ENCODE measurements at regions of chr10 and their contacts with region 1.

Region 1: DNA sequence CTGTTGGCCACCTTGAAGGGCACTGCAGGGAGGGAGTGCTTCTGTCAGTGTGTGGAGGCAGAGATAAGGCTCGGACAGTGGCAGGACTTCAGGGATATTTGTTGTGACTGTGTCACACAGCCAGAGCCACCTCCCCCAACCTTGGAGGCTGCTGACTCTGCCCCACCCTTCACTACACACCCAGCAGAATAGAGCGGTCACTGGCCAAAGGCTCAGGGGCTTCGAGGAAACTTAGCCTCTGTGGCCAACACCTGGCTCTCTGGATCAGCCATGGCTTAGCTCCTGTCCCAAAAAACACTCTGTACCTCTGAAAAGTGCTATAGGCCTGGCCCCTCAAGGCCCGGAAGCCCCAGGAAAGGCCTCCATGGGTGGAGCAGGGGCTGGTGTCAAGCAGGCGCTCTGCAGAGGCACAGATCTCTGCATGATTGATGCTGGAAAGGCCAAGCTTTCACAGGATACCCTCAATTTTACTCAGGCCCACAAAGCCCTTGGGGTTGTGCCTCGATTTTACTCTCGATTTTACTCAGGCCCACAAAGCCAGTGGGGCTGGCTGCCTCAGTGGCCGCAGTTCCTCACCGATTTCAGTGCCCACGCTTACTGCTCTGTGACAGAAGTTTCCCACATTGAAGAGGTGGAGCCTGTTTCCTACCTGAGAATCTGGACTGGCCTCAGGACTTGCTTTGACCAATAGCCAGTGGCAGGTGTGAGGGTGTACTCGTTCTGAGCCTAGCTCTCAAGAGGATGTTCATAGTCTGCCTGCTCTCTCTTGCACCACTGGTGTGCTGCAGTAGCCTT is 113.2 kb upstream of the GPR26 start:
- DNase-seq: peak; percentile 75
- CTCF ChIP-seq: no peak

Region 2: DNA sequence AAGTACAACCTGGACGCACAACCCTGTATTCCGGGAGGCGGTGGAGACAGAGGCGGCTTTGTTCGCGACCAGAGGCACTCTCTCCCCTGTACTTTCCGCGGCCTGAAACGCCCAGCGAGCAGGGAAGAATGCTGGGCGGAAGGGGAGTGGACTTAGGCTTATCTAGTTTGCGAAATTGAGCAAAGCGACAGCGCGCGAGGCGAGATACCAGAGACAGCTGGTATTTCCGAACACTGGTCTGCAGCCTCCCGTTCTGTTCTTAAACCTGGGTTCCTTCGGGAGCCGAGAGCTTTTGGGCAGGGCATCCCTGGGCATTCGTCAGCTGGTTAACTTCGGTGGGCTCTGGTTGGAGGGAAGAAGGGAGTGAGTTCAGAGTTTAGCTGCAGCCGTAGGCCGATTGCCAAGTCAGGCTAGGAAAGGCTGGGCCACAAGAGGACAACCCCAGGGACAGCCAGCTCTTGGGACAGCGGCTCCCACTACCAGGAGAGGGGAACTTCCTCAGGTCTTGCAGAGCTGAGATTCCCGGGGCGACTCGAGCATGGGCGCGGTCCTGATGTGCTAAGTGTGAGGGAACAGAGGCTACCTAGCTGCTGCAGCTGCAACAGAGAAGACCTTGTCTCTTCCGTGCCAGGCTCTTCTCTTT is 413.3 kb before region 1 on chr10:
- in situ Hi-C with region 1: loop called (anchors 5 kb)
- DNase-seq: peak; percentile 41
- CTCF ChIP-seq: no peak

Region 3: GRCh38 chr10:123392182-123392963 is 160.6 kb before region 1 on chr10:
- in situ Hi-C with region 1: loop called (anchors 5 kb)
- DNase-seq: peak; percentile 76
- CTCF ChIP-seq: no peak

Measured in GM13976 (cell line).